ENCODE measurements at regions of chr21 and their contacts with region 1.

Region 1: GRCh38 chr21:17911628-17912027 is 92.5 kb upstream of the C21orf91 start:
- DNase-seq: no peak
- ATAC-seq: no peak
- H3K4me3 ChIP-seq: no peak overlapping the region
- H3K4me3 Mint-ChIP-seq: no peak overlapping the region
- H3K27ac ChIP-seq: no peak overlapping the region
- H3K27ac Mint-ChIP-seq: no peak overlapping the region
- H3K4me1 ChIP-seq: no peaks in the 10 kb centered on the region
- H3K4me1 Mint-ChIP-seq: no peaks in the 10 kb centered on the region
- H3K27me3 ChIP-seq: no peaks in the 10 kb centered on the region
- H3K27me3 Mint-ChIP-seq: peaks cover 8% of the 10 kb centered on the region
- CTCF ChIP-seq: no peak

Region 2: GRCh38 chr21:17979763-17980162 is 68.1 kb after region 1 on chr21:
- CTCF ChIA-PET with region 1: no interaction called
- POLR2A ChIA-PET with region 1: no interaction called
- intact Hi-C with region 1: loop called in 1 of 2 experiments (anchors 10 kb)
- DNase-seq: no peak
- ATAC-seq: no peak
- H3K4me3 ChIP-seq: no peak overlapping the region
- H3K4me3 Mint-ChIP-seq: no peak overlapping the region
- H3K27ac ChIP-seq: no peak overlapping the region
- H3K27ac Mint-ChIP-seq: no peak overlapping the region
- H3K4me1 ChIP-seq: no peaks in the 10 kb centered on the region
- H3K4me1 Mint-ChIP-seq: no peaks in the 10 kb centered on the region
- H3K27me3 ChIP-seq: no peaks in the 10 kb centered on the region
- H3K27me3 Mint-ChIP-seq: no peaks in the 10 kb centered on the region
- CTCF ChIP-seq: no peak